Calu3 (cell line): ENCODE measurements at regions of chr5 and their contacts with region 1.

Region 1: GRCh38 chr5:98905857-98906690 is 22.7 kb downstream of the CHD1 start:
- DNase-seq: no peak
- H3K4me3 Mint-ChIP-seq: peak overlapping the region; percentile 27
- H3K27ac Mint-ChIP-seq: peak overlapping the region; percentile 76
- H3K4me1 Mint-ChIP-seq: peaks cover 55% of the 10 kb centered on the region
- H3K27me3 Mint-ChIP-seq: no peaks in the 10 kb centered on the region
- CTCF ChIP-seq: peak; percentile 72

Region 2: GRCh38 chr5:98865690-98866089 is 40.4 kb before region 1 on chr5:
- CTCF ChIA-PET with region 1: no interaction called
- intact Hi-C with region 1: no loop called
- DNase-seq: no peak
- H3K4me3 Mint-ChIP-seq: no peak overlapping the region
- H3K27ac Mint-ChIP-seq: no peak overlapping the region
- H3K4me1 Mint-ChIP-seq: peaks cover 24% of the 10 kb centered on the region
- H3K27me3 Mint-ChIP-seq: no peaks in the 10 kb centered on the region
- CTCF ChIP-seq: no peak

Region 3: DNA sequence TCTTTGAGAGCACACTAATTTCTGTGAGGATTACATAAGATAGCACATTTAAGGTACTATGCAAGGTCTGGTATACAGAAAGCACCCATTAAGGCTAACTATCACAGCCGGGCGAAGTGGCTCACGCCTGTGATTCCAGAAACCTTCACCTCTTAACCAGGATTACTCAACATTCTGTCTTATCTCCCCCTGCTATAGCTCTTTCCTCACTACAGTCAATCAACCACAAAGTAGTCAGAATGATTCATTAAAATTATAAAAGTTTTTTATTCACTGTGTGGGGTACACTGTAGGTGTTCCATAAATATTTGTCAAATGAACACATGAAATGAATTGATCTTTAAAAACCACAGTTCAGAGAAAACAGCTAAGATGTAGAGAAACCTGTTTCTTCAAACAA is 25.9 kb before region 1 on chr5:
- CTCF ChIA-PET with region 1: interaction called, 8 read pairs
- intact Hi-C with region 1: loop called (anchors 2 kb)
- DNase-seq: peak; percentile 46
- H3K4me3 Mint-ChIP-seq: no peak overlapping the region
- H3K27ac Mint-ChIP-seq: peak overlapping the region; percentile 6
- H3K4me1 Mint-ChIP-seq: peaks cover 59% of the 10 kb centered on the region
- H3K27me3 Mint-ChIP-seq: no peaks in the 10 kb centered on the region
- CTCF ChIP-seq: no peak

Region 4: GRCh38 chr5:98921947-98922505 is 16.0 kb after region 1 on chr5:
- CTCF ChIA-PET with region 1: no interaction called
- intact Hi-C with region 1: loop called (anchors 2 kb)
- DNase-seq: no peak
- H3K4me3 Mint-ChIP-seq: no peak overlapping the region
- H3K27ac Mint-ChIP-seq: peak overlapping the region; percentile 20
- H3K4me1 Mint-ChIP-seq: peaks cover 26% of the 10 kb centered on the region
- H3K27me3 Mint-ChIP-seq: no peaks in the 10 kb centered on the region
- CTCF ChIP-seq: no peak

Region 5: GRCh38 chr5:99032234-99033013 is 126.3 kb after region 1 on chr5:
- CTCF ChIA-PET with region 1: interaction called, 5 read pairs
- intact Hi-C with region 1: loop called (anchors 1 kb)
- DNase-seq: peak; percentile 80
- H3K4me3 Mint-ChIP-seq: peak overlapping the region; percentile 62
- H3K27ac Mint-ChIP-seq: peak overlapping the region; percentile 64
- H3K4me1 Mint-ChIP-seq: peaks cover 50% of the 10 kb centered on the region
- H3K27me3 Mint-ChIP-seq: no peaks in the 10 kb centered on the region
- CTCF ChIP-seq: peak; percentile 81